ENCODE measurements at regions of chr2 and their contacts with region 1.

Region 1: GRCh38 chr2:151973901-151974199 is 125.0 kb downstream of the CACNB4 start:
- DNase-seq: no peak
- H3K4me3 ChIP-seq: no peak overlapping the region
- H3K27ac ChIP-seq: no peak overlapping the region
- H3K27me3 ChIP-seq: peaks cover 5% of the 10 kb centered on the region
- CTCF ChIP-seq: no peak

Region 2: DNA sequence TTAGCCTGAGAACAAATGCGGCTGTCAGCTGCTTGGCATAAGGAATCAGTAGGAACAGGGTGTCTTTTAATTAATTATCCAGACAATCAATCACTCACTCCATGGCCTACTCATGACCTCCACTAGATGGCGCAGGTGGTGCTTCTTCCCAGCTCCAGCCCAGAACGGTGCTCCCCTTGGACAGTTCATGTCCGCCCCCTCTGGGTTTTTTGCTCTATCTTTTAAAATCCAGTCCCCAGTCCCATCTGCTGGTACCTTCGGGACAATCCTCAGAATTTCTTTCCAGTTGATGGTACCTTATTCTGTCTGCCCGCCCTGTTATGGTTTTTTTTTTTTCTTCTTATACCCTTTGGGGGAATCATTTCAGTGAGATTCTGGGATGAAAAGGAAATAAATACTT is 25.2 kb after region 1 on chr2:
- CTCF ChIA-PET with region 1: interaction called, 3 read pairs
- POLR2A ChIA-PET with region 1: interaction called, 13 read pairs
- DNase-seq: no peak
- H3K4me3 ChIP-seq: no peak overlapping the region
- H3K27ac ChIP-seq: no peak overlapping the region
- H3K27me3 ChIP-seq: peaks cover 6% of the 10 kb centered on the region
- CTCF ChIP-seq: peak; percentile 75

Measured in AG04450 (cell line).